K562 (cell line): ENCODE measurements at regions of chr10 and their contacts with region 1.

Region 1: GRCh38 chr10:132729810-132730572 is 56.0 kb downstream of the NKX6-2 start:
- DNase-seq: no peak
- ATAC-seq: no peak
- H3K4me3 ChIP-seq: no peak overlapping the region
- H3K27ac ChIP-seq: no peak overlapping the region
- H3K4me1 ChIP-seq: peaks cover 0 to 14% of the 10 kb centered on the region in 2 experiments; a peak in 1 of 5 replicates
- H3K27me3 ChIP-seq: no peaks in the 10 kb centered on the region
- CTCF ChIP-seq: no peak
- EP300 ChIP-seq: no peak
- POLR2A ChIP-seq: no peak
- RAD21 ChIP-seq: no peak

Region 2: GRCh38 chr10:132575356-132576201 is 154.4 kb before region 1 on chr10:
- CTCF ChIA-PET with region 1: no interaction called
- POLR2A ChIA-PET with region 1: no interaction called
- in situ Hi-C with region 1: no loop called
- intact Hi-C with region 1: no loop called
- DNase-seq: no peak
- ATAC-seq: no peak
- H3K4me3 ChIP-seq: no peak overlapping the region
- H3K27ac ChIP-seq: no peak overlapping the region
- H3K4me1 ChIP-seq: peaks cover 21 to 55% of the 10 kb centered on the region in 2 experiments
- H3K27me3 ChIP-seq: no peaks in the 10 kb centered on the region
- CTCF ChIP-seq: no peak
- EP300 ChIP-seq: no peak
- POLR2A ChIP-seq: no peak
- RAD21 ChIP-seq: no peak

Region 3: GRCh38 chr10:132616170-132616995 is 113.6 kb before region 1 on chr10:
- CTCF ChIA-PET with region 1: no interaction called
- POLR2A ChIA-PET with region 1: no interaction called
- in situ Hi-C with region 1: no loop called
- intact Hi-C with region 1: no loop called
- DNase-seq: no peak
- ATAC-seq: no peak
- H3K4me3 ChIP-seq: no peak overlapping the region
- H3K27ac ChIP-seq: no peak overlapping the region
- H3K4me1 ChIP-seq: peaks cover 0 to 17% of the 10 kb centered on the region in 2 experiments; a peak in 2 of 5 replicates
- H3K27me3 ChIP-seq: no peaks in the 10 kb centered on the region
- CTCF ChIP-seq: no peak
- EP300 ChIP-seq: no peak
- POLR2A ChIP-seq: no peak
- RAD21 ChIP-seq: no peak

Region 4: GRCh38 chr10:132690821-132691610 is 39.0 kb before region 1 on chr10:
- CTCF ChIA-PET with region 1: no interaction called
- POLR2A ChIA-PET with region 1: no interaction called
- in situ Hi-C with region 1: loop called (anchors 5 kb)
- intact Hi-C with region 1: no loop called
- DNase-seq: no peak
- ATAC-seq: no peak
- H3K4me3 ChIP-seq: no peak overlapping the region
- H3K27ac ChIP-seq: no peak overlapping the region
- H3K4me1 ChIP-seq: peaks cover 3 to 9% of the 10 kb centered on the region in 2 experiments; a peak in 4 of 5 replicates
- H3K27me3 ChIP-seq: no peaks in the 10 kb centered on the region
- CTCF ChIP-seq: no peak
- EP300 ChIP-seq: no peak
- POLR2A ChIP-seq: no peak
- RAD21 ChIP-seq: no peak

Region 5: DNA sequence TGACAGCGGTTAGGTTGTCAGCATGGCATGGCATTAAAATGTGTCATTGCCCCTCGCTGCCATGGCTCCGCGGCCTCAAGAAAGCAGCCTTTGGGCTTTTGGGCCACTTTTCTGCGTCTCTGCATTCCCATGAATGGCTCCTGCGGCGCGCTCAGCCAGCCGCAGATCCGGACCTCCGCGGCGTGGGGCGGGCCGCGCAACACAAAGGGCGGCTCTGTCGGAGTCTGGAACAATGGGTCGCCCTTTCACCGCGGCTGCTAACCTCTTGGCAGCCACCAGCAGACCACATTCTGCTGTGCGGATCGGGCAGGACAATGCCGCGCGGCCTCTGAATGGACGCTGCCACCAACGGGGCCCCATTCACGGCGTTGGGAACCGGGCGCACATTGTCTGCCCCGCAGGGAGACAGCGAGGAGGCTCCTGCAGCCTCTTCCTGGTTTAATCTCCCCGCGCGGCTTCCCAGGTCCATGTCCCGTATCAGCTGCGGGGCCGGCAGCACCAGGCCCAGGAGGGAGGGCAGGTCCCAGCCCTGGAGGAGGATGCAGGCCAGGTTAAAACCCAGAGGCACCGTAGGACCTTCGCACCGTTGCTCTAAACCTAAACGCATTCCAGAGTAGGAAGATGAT is 15.8 kb before region 1 on chr10:
- CTCF ChIA-PET with region 1: no interaction called
- POLR2A ChIA-PET with region 1: no interaction called
- in situ Hi-C with region 1: no loop called
- intact Hi-C with region 1: no loop called
- DNase-seq: no peak
- ATAC-seq: no peak
- H3K4me3 ChIP-seq: no peak overlapping the region
- H3K27ac ChIP-seq: no peak overlapping the region
- H3K4me1 ChIP-seq: peaks cover 0 to 15% of the 10 kb centered on the region in 2 experiments; a peak in 2 of 5 replicates
- H3K27me3 ChIP-seq: no peaks in the 10 kb centered on the region
- CTCF ChIP-seq: no peak
- EP300 ChIP-seq: no peak
- POLR2A ChIP-seq: no peak
- RAD21 ChIP-seq: no peak